Activated CD8-positive, alpha-beta T cell treated with anti-CD3 and anti-CD28 coated beads for 36 hours (primary cell): ENCODE measurements at regions of chr17 and their contacts with region 1.

Region 1: DNA sequence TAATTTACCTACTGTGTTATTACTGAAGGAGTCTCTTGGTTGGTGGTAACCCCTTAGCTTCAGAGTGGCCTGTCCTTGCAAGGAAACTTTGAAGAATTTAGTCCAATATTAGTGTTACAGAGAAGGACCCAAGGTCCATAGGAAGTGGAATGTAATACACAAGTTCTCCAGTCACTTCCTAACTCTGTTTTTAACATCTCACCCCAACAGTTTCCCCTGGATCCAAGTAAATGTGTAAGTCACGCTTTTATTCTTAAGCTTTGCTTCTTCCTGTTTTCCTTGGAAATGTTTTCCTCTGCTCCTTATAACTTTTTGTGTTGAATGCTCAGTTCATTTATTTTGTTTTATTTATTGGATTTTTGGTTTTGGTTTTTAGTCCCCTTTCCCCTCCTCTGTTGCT is 25.9 kb upstream of the RPRML start:
- DNase-seq: no peak
- ATAC-seq: no peak
- H3K4me3 Mint-ChIP-seq: no peak overlapping the region
- H3K27ac Mint-ChIP-seq: no peak overlapping the region
- H3K4me1 Mint-ChIP-seq: peaks cover 5% of the 10 kb centered on the region
- H3K27me3 Mint-ChIP-seq: no peaks in the 10 kb centered on the region
- CTCF ChIP-seq: no peak

Region 2: GRCh38 chr17:46847204-46848191 is 157.4 kb before region 1 on chr17:
- CTCF ChIA-PET with region 1: interaction called, 4 read pairs
- POLR2A ChIA-PET with region 1: no interaction called
- intact Hi-C with region 1: loop called (anchors 5 kb)
- DNase-seq: no peak
- ATAC-seq: no peak
- H3K4me3 Mint-ChIP-seq: no peak overlapping the region
- H3K27ac Mint-ChIP-seq: no peak overlapping the region
- H3K4me1 Mint-ChIP-seq: peaks cover 6% of the 10 kb centered on the region
- H3K27me3 Mint-ChIP-seq: peaks cover 49% of the 10 kb centered on the region
- CTCF ChIP-seq: no peak

Region 3: GRCh38 chr17:47057830-47058229 is 52.9 kb after region 1 on chr17:
- CTCF ChIA-PET with region 1: no interaction called
- POLR2A ChIA-PET with region 1: no interaction called
- intact Hi-C with region 1: no loop called
- DNase-seq: no peak
- ATAC-seq: no peak
- H3K4me3 Mint-ChIP-seq: no peak overlapping the region
- H3K27ac Mint-ChIP-seq: no peak overlapping the region
- H3K4me1 Mint-ChIP-seq: no peaks in the 10 kb centered on the region
- H3K27me3 Mint-ChIP-seq: no peaks in the 10 kb centered on the region
- CTCF ChIP-seq: no peak